Head of caudate nucleus (tissue), 42 donors: ENCODE measurements at regions of chr5 and their contacts with region 1.

Region 1: DNA sequence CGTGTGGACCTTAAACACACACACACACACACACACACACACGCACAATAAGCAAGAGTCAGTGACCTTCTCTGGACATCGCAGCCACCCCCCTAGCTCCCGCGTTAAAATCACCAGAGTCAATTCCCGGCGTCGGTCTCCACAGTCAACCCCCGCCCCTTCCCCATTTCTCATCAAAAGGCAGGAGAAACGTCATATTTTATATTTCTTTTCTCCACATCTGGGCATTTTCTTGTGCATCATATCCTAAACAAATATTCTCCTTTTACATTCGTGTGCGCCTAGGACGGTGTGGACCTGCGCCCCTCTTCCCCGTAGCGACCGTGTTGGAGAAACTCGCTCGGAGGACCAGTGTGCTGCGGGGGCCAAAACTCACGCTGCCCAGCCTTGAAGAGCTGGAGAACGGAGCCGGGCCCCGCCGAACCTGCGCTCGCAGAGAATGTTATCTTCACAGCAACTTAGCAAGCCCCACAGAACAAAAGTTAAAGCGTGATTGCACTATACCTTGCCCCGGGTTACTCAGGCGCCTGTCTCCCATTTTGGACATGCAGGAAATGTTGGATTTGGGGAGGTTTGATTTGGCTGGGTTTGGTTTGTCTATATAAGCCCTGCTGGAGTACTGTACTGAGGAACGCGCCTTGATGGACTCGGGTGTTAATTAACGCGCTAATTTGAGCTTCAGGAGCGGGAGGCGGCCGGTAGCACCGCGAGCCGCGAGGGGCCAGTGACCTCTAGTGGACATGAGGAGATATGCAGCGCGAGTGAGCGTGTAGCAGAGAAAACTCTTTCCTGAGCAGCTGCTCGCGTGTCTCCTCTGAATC is 192.4 kb downstream of the MEF2C start:
- DNase-seq: peak; percentile 79 to 95 (median 88)

Region 2: DNA sequence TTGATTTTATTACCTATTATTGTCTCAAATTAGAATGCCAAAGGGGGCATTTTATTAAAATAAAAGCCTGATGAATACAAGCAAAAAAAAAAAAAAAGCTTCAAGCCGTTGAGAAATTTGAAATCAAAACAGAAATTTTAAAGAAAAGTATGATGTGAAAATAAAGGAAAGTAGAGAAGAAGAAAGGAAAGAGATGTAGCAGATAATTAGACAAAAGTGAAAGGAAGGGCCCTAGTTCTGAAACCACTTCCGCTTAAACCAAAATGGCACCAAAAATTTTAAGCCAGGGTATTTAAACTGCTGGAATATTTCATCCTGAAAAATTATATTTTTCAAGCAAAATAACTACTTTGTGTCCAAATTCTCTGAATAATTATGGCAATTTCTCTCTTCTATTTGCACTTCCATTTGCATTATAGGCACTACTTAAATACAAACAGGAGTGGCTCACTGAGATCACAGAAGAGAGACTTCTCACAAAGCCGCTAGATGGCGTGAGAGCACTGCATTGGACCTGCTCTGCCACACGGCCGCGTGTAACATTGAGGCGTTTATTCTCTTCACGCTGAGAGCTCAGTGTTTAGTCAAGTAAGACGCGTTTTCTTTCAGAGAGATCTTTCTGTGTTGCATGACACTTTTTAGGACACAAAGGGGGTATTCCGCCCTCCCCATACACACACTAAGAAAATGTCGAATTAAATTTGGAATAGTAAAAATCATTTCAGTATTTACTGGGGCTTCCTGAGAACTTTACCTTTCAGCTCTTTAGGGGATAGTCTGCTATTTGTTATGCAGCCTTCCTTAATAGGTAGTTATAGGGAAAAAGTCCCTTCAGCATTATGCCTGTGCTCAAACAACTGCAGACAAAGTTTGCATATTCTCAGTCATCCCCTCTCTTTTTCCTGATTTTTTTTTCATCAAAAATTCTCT is 909.5 kb before region 1 on chr5:
- intact Hi-C with region 1: loop called (anchors 2 kb)
- DNase-seq: peak; percentile 79 to 96 (median 92)

Region 3: GRCh38 chr5:87949676-87950631 is 740.7 kb before region 1 on chr5:
- intact Hi-C with region 1: loop called (anchors 10 kb)
- DNase-seq: peak; percentile 14 to 91 (median 66)

Region 4: GRCh38 chr5:88459971-88460370 is 230.6 kb before region 1 on chr5:
- intact Hi-C with region 1: no loop called
- DNase-seq: no peak